Pancreas (tissue), 10 donors: ENCODE measurements at regions of chr6 and their contacts with region 1.

Region 1: GRCh38 chr6:42043787-42044475 is 6.4 kb upstream of the TAF8 start:
- DNase-seq: peak; percentile 71 to 95 (median 88)
- ATAC-seq: peak; percentile 65 to 84 (median 70)
- H3K4me3 ChIP-seq: no peak overlapping the region
- H3K27ac ChIP-seq: peak overlapping the region in 2 of 4 donors; percentile 83 to 87
- H3K4me1 ChIP-seq: peaks cover 12 to 27% (median 22%) of the 10 kb centered on the region in 3 donors
- H3K27me3 ChIP-seq: no peaks in the 10 kb centered on the region
- CTCF ChIP-seq: peak; percentile 86 to 96 (median 94)

Region 2: GRCh38 chr6:41787219-41787917 is 256.6 kb before region 1 on chr6 and contains the start of gene TOMM6:
- intact Hi-C with region 1: loop called in 2 of 3 experiments (anchors 10 kb)
- DNase-seq: peak; percentile 92 to 99 (median 96)
- ATAC-seq: peak; percentile 88 to 94 (median 90)
- H3K4me3 ChIP-seq: peak within 1 kb of the TSS; percentile 61 to 93 (median 82)
- H3K27ac ChIP-seq: peak within 1 kb of the TSS; percentile 86 to 93 (median 92)
- H3K4me1 ChIP-seq: peaks cover 9 to 14% (median 11%) of the 10 kb centered on the region in 3 donors
- H3K27me3 ChIP-seq: no peaks in the 10 kb centered on the region
- CTCF ChIP-seq: peak; percentile 91 to 97 (median 95)
- total RNA-seq, gene TOMM6: 48.6 to 86.2 (median 66.8) TPM

Region 3: GRCh38 chr6:41846666-41847237 is 197.2 kb before region 1 on chr6:
- intact Hi-C with region 1: loop called in 1 of 3 experiments (anchors 10 kb)
- DNase-seq: peak in 4 of 6 donors; percentile 27 to 76 (median 49)
- ATAC-seq: peak; percentile 88 to 99 (median 98)
- H3K4me3 ChIP-seq: no peak overlapping the region
- H3K27ac ChIP-seq: peak overlapping the region in 1 of 4 donors; percentile 20
- H3K4me1 ChIP-seq: no peaks in the 10 kb centered on the region
- H3K27me3 ChIP-seq: no peaks in the 10 kb centered on the region
- CTCF ChIP-seq: peak; percentile 36 to 71 (median 64)

Region 4: DNA sequence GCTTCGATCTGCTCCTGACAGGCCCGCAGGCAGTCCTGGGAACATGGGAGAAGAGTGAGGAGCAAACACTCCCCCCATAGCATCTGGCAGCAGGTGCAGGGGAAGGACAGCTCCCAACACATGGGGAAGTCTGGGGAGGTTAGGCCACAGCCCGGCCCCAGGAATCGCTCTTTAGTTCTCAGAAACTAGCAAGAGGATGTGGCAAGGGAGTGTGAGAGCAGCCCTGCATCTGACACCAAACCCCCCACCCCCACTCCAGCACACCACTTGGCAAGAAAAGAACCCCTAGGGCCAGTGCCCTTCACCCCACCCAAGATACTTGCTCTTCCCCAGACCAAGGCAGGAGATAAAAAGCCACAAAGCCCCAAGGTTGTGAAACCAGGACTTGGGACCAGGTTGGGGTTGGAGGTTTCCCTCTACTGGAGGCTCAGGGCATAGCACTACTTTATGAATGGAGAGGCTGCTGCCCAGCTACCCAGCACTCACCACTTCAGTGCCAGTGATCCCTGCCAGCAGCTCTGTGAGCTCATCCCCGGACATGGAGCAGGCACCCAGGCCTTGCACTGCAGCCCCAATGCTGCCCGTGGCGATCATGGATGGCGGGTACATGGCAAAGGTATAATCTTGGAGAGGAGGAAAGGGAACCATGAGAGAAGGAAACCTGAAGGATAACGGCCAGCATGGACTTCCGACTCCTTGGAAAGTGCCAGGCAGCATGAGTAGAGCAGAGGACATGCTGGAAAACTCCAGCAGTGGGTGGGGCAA is 107.7 kb before region 1 on chr6:
- intact Hi-C with region 1: loop called in 1 of 3 experiments (anchors 10 kb)
- DNase-seq: peak; percentile 58 to 78 (median 62)
- ATAC-seq: peak; percentile 77 to 89 (median 85)
- H3K4me3 ChIP-seq: no peak overlapping the region
- H3K27ac ChIP-seq: no peak overlapping the region
- H3K4me1 ChIP-seq: peaks cover 0 to 7% (median 0%) of the 10 kb centered on the region in 3 donors
- H3K27me3 ChIP-seq: no peaks in the 10 kb centered on the region
- CTCF ChIP-seq: peak; percentile 63 to 80 (median 73)

Region 5: GRCh38 chr6:42359021-42359420 is 315.1 kb after region 1 on chr6:
- intact Hi-C with region 1: no loop called
- DNase-seq: no peak
- ATAC-seq: no peak
- H3K4me3 ChIP-seq: no peak overlapping the region
- H3K27ac ChIP-seq: no peak overlapping the region
- H3K4me1 ChIP-seq: no peaks in the 10 kb centered on the region
- H3K27me3 ChIP-seq: no peaks in the 10 kb centered on the region
- CTCF ChIP-seq: no peak